CD14-positive monocyte (primary cell): ENCODE measurements at regions of chr6 and their contacts with region 1.

Region 1: GRCh38 chr6:85642774-85643536 is at the start of gene SYNCRIP:
- DNase-seq: peak; percentile 95 to 98 (median 96)
- H3K4me3 ChIP-seq: peak within 1 kb of the TSS; percentile 87 to 98 (median 91)
- H3K4me3 Mint-ChIP-seq: peak within 1 kb of the TSS; percentile 91 to 97
- H3K27ac ChIP-seq: peak within 1 kb of the TSS; percentile 99 to 100
- H3K27ac Mint-ChIP-seq: peak within 1 kb of the TSS; percentile 97 to 100 (median 99)
- H3K4me1 ChIP-seq: peaks cover 29 to 34% of the 10 kb centered on the region in 2 donors
- H3K4me1 Mint-ChIP-seq: peaks cover 45% of the 10 kb centered on the region
- H3K27me3 ChIP-seq: no peaks in the 10 kb centered on the region
- H3K27me3 Mint-ChIP-seq: no peaks in the 10 kb centered on the region
- CTCF ChIP-seq: no peak
- polyA plus RNA-seq, gene SYNCRIP: 11.1 to 41.4 (median 36.6) TPM

Region 2: DNA sequence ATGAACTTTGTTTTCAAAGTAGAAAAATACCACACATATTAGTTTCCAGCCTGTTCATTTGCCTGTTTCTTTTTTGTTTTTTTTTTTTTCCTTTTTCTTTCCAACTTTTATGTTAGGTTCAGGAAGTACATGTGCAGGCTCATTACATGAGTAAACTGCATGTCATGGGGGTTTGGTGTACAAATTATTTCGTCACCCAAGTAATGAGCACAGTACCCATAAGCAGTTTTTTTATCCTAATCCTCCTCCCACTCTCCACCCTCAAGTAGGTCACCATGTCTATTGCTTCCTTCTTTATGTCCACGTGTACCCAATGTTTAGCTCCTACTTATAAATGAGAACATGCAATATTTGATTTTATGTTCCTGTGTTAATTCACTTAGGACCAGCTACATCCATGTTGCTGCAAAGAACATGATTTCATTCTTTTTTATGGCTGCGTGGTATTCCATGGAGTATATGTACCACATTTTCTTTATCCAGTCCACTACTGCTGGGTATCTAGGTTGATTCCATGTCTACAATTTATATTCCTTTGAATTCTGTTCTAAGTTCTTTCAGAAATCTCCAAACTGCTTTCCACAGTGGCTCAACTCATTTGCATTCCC is 81.1 kb before region 1 on chr6:
- intact Hi-C with region 1: no loop called
- DNase-seq: no peak
- H3K4me3 ChIP-seq: no peak overlapping the region
- H3K4me3 Mint-ChIP-seq: no peak overlapping the region
- H3K27ac ChIP-seq: no peak overlapping the region
- H3K27ac Mint-ChIP-seq: peak overlapping the region in 1 of 7 donors; percentile 52
- H3K4me1 ChIP-seq: no peaks in the 10 kb centered on the region
- H3K4me1 Mint-ChIP-seq: peaks cover 4% of the 10 kb centered on the region
- H3K27me3 ChIP-seq: no peaks in the 10 kb centered on the region
- H3K27me3 Mint-ChIP-seq: peaks cover 0 to 2% (median 0%) of the 10 kb centered on the region in 3 donors
- CTCF ChIP-seq: no peak

Region 3: DNA sequence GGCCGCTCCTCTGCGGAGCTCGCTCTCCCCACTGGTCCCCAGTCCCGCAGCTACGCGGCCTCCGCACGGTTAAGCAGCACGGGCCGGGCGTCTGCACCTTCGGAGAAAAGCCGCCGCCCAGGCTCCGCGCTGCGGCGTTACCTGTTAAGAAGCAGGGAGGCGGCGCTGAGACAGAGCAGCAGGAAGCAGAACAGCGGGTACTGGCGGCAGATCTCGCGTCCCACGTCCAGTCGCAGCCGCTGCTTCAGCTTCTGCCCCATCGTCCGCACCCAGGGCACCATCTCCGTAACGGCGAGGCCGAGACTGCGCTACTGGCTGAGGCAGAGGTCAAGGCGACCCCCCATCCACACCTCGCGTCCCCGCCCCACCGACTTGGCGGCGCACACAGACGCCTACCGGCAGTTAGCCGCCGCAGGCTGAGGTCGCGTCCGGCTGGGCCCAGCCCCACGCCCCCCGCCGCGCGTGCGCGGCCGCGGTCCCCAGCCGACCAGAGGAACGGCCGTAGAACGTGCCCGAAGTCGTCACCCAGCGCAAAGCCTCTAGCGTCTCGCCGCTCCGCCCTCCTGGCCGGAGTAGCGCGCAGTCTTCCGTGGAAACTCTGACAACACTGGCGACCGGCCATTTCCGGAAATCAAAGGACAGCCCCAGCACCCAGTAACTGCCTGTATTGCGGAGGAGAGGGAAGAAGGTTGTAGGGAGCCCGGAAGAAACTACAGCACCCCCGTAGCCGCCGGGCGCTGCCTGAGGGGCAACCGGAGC is 49.3 kb before region 1 on chr6 and contains the start of gene SNX14:
- intact Hi-C with region 1: loop called (anchors 2 to 5 kb)
- DNase-seq: peak; percentile 96 to 97 (median 96)
- H3K4me3 ChIP-seq: peak within 1 kb of the TSS; percentile 61 to 97 (median 86)
- H3K4me3 Mint-ChIP-seq: peak within 1 kb of the TSS; percentile 96 to 98
- H3K27ac ChIP-seq: peak within 1 kb of the TSS; percentile 95 to 97
- H3K27ac Mint-ChIP-seq: peak within 1 kb of the TSS; percentile 92 to 99 (median 97)
- H3K4me1 ChIP-seq: peaks cover 18 to 33% of the 10 kb centered on the region in 2 donors
- H3K4me1 Mint-ChIP-seq: peaks cover 26% of the 10 kb centered on the region
- H3K27me3 ChIP-seq: no peaks in the 10 kb centered on the region
- H3K27me3 Mint-ChIP-seq: peaks cover 0 to 2% (median 0%) of the 10 kb centered on the region in 3 donors
- CTCF ChIP-seq: no peak
- polyA plus RNA-seq, gene SNX14: 40.2 to 75.6 (median 73.3) TPM

Region 4: GRCh38 chr6:86459978-86460377 is 817.0 kb after region 1 on chr6:
- intact Hi-C with region 1: no loop called
- DNase-seq: no peak
- H3K4me3 ChIP-seq: no peak overlapping the region
- H3K4me3 Mint-ChIP-seq: no peak overlapping the region
- H3K27ac ChIP-seq: no peak overlapping the region
- H3K27ac Mint-ChIP-seq: no peak overlapping the region
- H3K4me1 ChIP-seq: no peaks in the 10 kb centered on the region
- H3K4me1 Mint-ChIP-seq: no peaks in the 10 kb centered on the region
- H3K27me3 ChIP-seq: no peaks in the 10 kb centered on the region
- H3K27me3 Mint-ChIP-seq: no peaks in the 10 kb centered on the region
- CTCF ChIP-seq: no peak